Gastrocnemius medialis (tissue), 4 donors: ENCODE measurements at regions of chr2 and their contacts with region 1.

Region 1: DNA sequence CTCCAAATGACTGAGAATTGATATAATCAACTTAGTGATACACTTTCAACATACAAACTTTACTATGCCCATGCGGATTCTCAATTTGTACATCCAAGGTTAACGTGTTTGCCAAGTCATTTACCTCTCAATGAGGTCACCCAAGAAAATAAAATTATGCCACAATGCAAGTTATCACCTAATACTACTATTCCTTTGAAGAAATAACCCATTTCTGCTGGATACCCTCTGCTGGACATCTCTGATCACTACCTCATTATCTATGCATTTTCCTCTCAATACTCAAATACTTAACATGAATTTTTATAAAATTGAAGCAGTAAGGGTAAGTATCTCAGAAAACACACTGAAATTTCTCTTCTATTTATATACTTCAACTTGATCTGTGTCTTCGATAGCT is 12.7 kb downstream of the HNRNPLL start:
- DNase-seq: no peak
- ATAC-seq: no peak
- H3K4me3 ChIP-seq: no peak overlapping the region
- H3K27ac ChIP-seq: peak overlapping the region; percentile 77 to 98 (median 90)
- H3K4me1 ChIP-seq: peaks cover 67 to 88% of the 10 kb centered on the region in 2 donors
- H3K27me3 ChIP-seq: no peaks in the 10 kb centered on the region
- CTCF ChIP-seq: no peak
- POLR2A ChIP-seq: no peak

Region 2: DNA sequence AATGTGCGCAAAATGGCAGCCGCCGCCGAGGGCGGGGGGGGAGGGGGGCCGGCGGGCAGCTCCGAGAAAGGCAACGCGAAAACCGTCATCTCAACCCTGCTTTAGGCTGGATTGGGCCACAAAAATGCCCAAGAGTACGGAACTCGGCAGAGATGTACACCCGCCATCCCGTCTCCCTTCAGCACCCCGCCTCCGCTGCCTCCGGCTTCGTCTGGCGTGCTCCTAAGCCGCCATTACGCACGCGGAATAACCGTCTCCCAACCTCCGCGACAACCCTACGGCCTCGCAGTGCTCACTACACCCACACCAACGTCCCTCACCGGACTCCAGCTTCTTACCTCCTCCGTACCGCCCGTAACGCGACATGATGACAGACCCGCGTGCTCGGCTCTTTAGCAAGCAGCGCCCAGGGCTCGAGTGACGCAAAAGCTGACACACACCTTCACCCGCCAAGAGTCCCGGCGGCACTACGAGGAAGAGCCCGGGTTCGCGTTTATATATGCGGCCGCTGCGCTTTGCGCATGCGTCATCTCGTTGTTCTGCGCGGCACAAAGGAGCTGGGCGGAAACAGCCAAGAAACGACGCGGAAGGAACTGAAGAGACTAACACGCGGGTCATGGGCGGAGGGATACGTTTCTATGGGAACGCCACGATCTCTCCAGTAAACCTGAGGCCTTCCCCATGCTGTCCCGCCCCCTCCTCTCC is 161.0 kb after region 1 on chr2 and contains the start of gene SRSF7:
- in situ Hi-C with region 1: loop called in 2 of 4 experiments (anchors 5 to 10 kb)
- intact Hi-C with region 1: no loop called
- DNase-seq: peak; percentile 96 to 97
- ATAC-seq: peak; percentile 94 to 96
- H3K4me3 ChIP-seq: peak within 1 kb of the TSS; percentile 72 to 88 (median 82)
- H3K27ac ChIP-seq: peak within 1 kb of the TSS; percentile 96 to 98 (median 97)
- H3K4me1 ChIP-seq: peaks cover 24 to 26% of the 10 kb centered on the region in 2 donors
- H3K27me3 ChIP-seq: no peaks in the 10 kb centered on the region
- CTCF ChIP-seq: no peak
- POLR2A ChIP-seq: peak; percentile 100
- total RNA-seq, gene SRSF7: 21.5 to 51.4 (median 34.1) TPM